SK-N-SH (cell line): ENCODE measurements at regions of chr7 and their contacts with region 1.

Region 1: GRCh38 chr7:56051339-56052191 is at the starts of genes CCT6A and PSPH:
- DNase-seq: peak; percentile 99
- H3K4me3 ChIP-seq: peak within 1 kb of the TSS; percentile 74 to 98
- H3K27ac ChIP-seq: peak within 1 kb of the TSS; percentile 85 to 90
- H3K4me1 ChIP-seq: peaks cover 22 to 52% of the 10 kb centered on the region in 2 experiments
- H3K27me3 ChIP-seq: no peaks in the 10 kb centered on the region
- CTCF ChIP-seq: peak; percentile 8; the same call in 1 of the 2 replicates
- EP300 ChIP-seq: peak; percentile 24 to 50; a peak in 3 of 4 replicates
- RAD21 ChIP-seq: no peak; the same call in 1 of the 2 replicates
- polyA plus RNA-seq, gene CCT6A: 221 and 345 TPM in 2 replicates
- polyA plus RNA-seq, gene PSPH: 42.0 and 50.5 TPM in 2 replicates

Region 2: GRCh38 chr7:56033671-56034432 is 17.7 kb before region 1 on chr7:
- CTCF ChIA-PET with region 1: interaction called, 9 read pairs
- POLR2A ChIA-PET with region 1: interaction called, 20 read pairs
- DNase-seq: peak; percentile 95
- H3K4me3 ChIP-seq: peak overlapping the region; percentile 53 to 78
- H3K27ac ChIP-seq: peak overlapping the region; percentile 50 to 76; a peak in 3 of 4 replicates
- H3K4me1 ChIP-seq: no peaks in the 10 kb centered on the region; a peak in 1 of 4 replicates
- H3K27me3 ChIP-seq: no peaks in the 10 kb centered on the region
- CTCF ChIP-seq: peak; percentile 53
- EP300 ChIP-seq: no peak; a peak in 2 of 4 replicates
- RAD21 ChIP-seq: peak; percentile 24; the same call in 1 of the 2 replicates

Region 3: GRCh38 chr7:56063882-56064625 is 12.5 kb after region 1 on chr7 and contains the start of gene SUMF2:
- CTCF ChIA-PET with region 1: interaction called, 13 read pairs
- POLR2A ChIA-PET with region 1: interaction called, 36 read pairs
- DNase-seq: peak; percentile 99
- H3K4me3 ChIP-seq: peak within 1 kb of the TSS; percentile 70 to 88
- H3K27ac ChIP-seq: peak within 1 kb of the TSS; percentile 78 to 90
- H3K4me1 ChIP-seq: peaks cover 4 to 23% of the 10 kb centered on the region in 2 experiments; a peak in 3 of 4 replicates
- H3K27me3 ChIP-seq: no peaks in the 10 kb centered on the region
- CTCF ChIP-seq: peak; percentile 24; the same call in 1 of the 2 replicates
- EP300 ChIP-seq: 0 out of 4 replicates have a peak, but pooled peaks of 1 of the 2 experiments have one; percentile 16
- RAD21 ChIP-seq: peak; percentile 37; the same call in 1 of the 2 replicates
- polyA plus RNA-seq, gene SUMF2: 130 and 162 TPM in 2 replicates

Region 4: GRCh38 chr7:56238441-56238840 is 186.9 kb after region 1 on chr7:
- CTCF ChIA-PET with region 1: no interaction called
- POLR2A ChIA-PET with region 1: no interaction called
- DNase-seq: no peak
- H3K4me3 ChIP-seq: no peak overlapping the region
- H3K27ac ChIP-seq: no peak overlapping the region
- H3K4me1 ChIP-seq: no peaks in the 10 kb centered on the region
- H3K27me3 ChIP-seq: no peaks in the 10 kb centered on the region
- CTCF ChIP-seq: no peak
- EP300 ChIP-seq: no peak
- RAD21 ChIP-seq: no peak